Cardiac septum (tissue), 1 donor: ENCODE measurements at regions of chr5 and their contacts with region 1.

Region 1: GRCh38 chr5:97629276-97629675 is 446.2 kb upstream of the RIOK2 start:
- DNase-seq: no peak

Region 2: GRCh38 chr5:97406946-97407676 is 222.2 kb before region 1 on chr5:
- intact Hi-C with region 1: no loop called
- DNase-seq: no peak

Region 3: DNA sequence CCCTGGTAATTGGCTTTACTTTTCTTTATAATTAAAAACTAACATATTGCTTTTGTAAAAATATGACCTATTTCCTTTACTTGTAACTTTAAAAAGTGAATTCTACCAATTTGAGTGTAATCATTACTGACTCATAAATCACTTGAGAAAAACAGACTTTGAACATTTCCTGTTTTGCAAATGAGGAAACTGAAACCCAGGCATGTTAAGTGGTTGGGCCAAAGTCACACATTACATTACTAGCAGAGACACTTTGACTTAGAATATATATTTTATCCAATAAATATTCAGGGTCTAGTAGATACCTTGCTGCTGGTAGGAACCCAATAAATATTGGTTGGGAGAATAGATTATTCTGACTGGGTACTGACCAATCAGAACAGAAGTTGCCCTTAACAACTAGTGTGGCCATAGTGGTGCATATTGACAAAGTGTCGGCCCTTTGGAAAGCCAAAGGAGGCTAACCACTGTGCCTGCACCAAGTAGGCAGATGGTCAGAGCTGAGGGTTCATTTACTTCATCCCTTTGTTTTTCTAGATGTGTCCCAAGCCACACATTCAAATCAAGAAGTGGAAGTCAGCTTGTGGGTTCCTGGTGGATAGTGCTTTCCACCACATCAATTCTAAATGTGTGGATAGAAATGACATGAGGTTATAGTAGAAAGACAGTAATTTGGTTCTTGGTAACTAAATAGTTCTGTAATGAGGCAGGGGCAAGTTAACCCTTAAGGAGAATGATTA is 81.1 kb before region 1 on chr5:
- intact Hi-C with region 1: loop called (anchors 10 kb)
- DNase-seq: no peak

Region 4: DNA sequence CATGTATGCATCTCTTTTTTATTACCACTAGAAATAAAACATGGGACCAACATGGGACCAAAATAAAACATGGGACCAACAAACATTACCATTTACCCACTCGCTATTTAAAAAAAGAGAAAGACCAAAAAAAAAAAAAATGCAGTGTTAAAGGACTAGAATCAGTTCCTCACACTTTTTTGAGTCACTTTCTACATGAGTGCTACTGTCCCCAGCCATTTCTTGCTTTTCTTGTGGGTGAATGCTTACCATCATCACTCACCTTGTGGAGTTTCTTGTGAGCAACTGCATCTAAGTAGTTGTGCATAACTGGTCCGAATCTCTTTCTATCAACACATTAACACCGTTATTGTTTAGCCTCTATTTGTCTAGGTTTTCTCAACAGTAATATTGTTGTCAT is 47.3 kb after region 1 on chr5:
- intact Hi-C with region 1: no loop called
- DNase-seq: no peak